ENCODE measurements at regions of chr7 and their contacts with region 1.

Region 1: GRCh38 chr7:9175871-9176270 is 742.5 kb downstream of the NXPH1 start:
- DNase-seq: no peak
- H3K4me3 ChIP-seq: no peak overlapping the region
- H3K4me3 Mint-ChIP-seq: no peak overlapping the region
- H3K27ac Mint-ChIP-seq: no peak overlapping the region
- H3K4me1 ChIP-seq: no peaks in the 10 kb centered on the region
- H3K4me1 Mint-ChIP-seq: no peaks in the 10 kb centered on the region
- H3K27me3 ChIP-seq: no peaks in the 10 kb centered on the region
- H3K27me3 Mint-ChIP-seq: peaks cover 2% of the 10 kb centered on the region
- CTCF ChIP-seq: no peak

Region 2: GRCh38 chr7:9120331-9120730 is 55.5 kb before region 1 on chr7:
- CTCF ChIA-PET with region 1: no interaction called
- POLR2A ChIA-PET with region 1: no interaction called
- intact Hi-C with region 1: loop called (anchors 5 kb)
- DNase-seq: no peak
- H3K4me3 ChIP-seq: no peak overlapping the region
- H3K4me3 Mint-ChIP-seq: no peak overlapping the region
- H3K27ac Mint-ChIP-seq: no peak overlapping the region
- H3K4me1 ChIP-seq: no peaks in the 10 kb centered on the region
- H3K4me1 Mint-ChIP-seq: no peaks in the 10 kb centered on the region
- H3K27me3 ChIP-seq: no peaks in the 10 kb centered on the region
- H3K27me3 Mint-ChIP-seq: peaks cover 3% of the 10 kb centered on the region
- CTCF ChIP-seq: no peak

Measured in Caco-2 (cell line).